Activated T-helper 1 cell treated with anti-CD3 and anti-CD28 coated beads, Interleukin-12 subunit alpha, Interleukin-12 subunit beta, Interleukin-2, Interleukin-4 antibody, amounts not matched to agents 30 ng/mL and 10 ng/mL and 1 ng/mL, durations not matched to agents 14 hours and 24 hours and 36 hours (primary cell): ENCODE measurements at regions of chr14 and their contacts with region 1.

Region 1: DNA sequence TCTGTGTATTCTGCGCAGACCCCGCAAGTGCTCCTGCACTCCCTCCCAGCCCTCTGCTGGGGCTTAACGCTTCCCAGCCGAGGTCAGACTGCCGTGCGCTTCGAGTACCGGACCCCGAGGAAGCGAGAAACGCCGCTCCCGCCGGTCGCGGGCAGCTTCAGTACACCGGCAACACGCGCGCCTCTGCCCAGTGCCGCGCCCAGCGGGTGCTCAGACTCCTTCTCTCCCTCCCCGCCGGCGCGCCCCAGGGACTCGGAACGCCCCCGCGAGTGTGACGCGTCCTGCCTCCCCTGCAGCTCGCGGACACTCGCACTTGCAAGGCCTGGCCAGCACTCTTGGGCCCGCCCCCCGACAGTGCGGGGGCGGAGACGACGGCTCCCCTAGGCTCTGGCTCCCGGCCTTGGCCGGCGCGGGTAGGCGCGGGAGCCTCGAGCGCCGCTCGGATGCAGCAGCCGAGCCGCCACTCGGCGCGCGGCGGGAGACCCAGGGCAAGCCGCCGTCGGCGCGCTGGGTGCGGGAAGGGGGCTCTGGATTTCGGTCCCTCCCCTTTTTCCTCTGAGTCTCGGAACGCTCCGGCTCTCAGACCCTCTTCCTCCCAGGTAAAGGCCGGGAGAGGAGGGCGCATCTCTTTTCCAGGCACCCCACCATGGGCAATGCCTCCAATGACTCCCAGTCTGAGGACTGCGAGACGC is at the start of gene PTGER2:
- DNase-seq: peak; percentile 85
- H3K4me3 Mint-ChIP-seq: peak within 1 kb of the TSS; percentile 98
- H3K27ac Mint-ChIP-seq: peak within 1 kb of the TSS; percentile 99
- H3K4me1 Mint-ChIP-seq: peaks cover 71% of the 10 kb centered on the region
- H3K27me3 Mint-ChIP-seq: peaks cover 1% of the 10 kb centered on the region
- total RNA-seq, gene PTGER2: 67.4 and 67.9 TPM in 2 replicates

Region 2: DNA sequence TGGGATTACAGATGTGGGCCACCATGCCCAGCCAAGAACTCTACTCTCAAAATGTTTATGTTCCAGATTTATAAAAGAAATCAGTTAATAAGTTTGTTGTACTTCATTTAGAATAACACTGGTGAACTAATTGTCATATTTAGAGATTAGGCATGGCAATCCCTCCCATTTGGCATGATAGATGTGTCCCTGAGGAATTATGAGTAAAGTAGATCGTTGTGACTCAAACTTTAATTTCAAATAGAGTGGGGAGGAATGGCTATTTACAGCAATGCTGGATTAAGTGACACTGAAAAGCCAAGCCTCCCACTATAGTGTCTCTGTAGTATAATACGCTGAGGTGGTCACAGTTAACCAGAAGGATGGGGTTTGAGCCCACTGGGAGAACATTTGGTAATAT is 364.0 kb before region 1 on chr14:
- intact Hi-C with region 1: no loop called
- DNase-seq: no peak
- H3K4me3 Mint-ChIP-seq: no peak overlapping the region
- H3K27ac Mint-ChIP-seq: peak overlapping the region; percentile 65
- H3K4me1 Mint-ChIP-seq: peaks cover 5% of the 10 kb centered on the region
- H3K27me3 Mint-ChIP-seq: no peaks in the 10 kb centered on the region

Region 3: GRCh38 chr14:51989293-51990234 is 324.5 kb before region 1 on chr14 and contains the start of gene RTRAF:
- intact Hi-C with region 1: loop called (anchors 5 kb)
- DNase-seq: peak; percentile 89
- H3K4me3 Mint-ChIP-seq: peak within 1 kb of the TSS; percentile 94
- H3K27ac Mint-ChIP-seq: peak within 1 kb of the TSS; percentile 91
- H3K4me1 Mint-ChIP-seq: peaks cover 31% of the 10 kb centered on the region
- H3K27me3 Mint-ChIP-seq: no peaks in the 10 kb centered on the region
- total RNA-seq, gene RTRAF: 215 and 230 TPM in 2 replicates

Region 4: GRCh38 chr14:52325126-52325525 is 11.1 kb after region 1 on chr14:
- intact Hi-C with region 1: loop called (anchors 1 kb)
- DNase-seq: peak; percentile 52
- H3K4me3 Mint-ChIP-seq: peak overlapping the region; percentile 77
- H3K27ac Mint-ChIP-seq: peak overlapping the region; percentile 62
- H3K4me1 Mint-ChIP-seq: peaks cover 90% of the 10 kb centered on the region
- H3K27me3 Mint-ChIP-seq: no peaks in the 10 kb centered on the region

Region 5: GRCh38 chr14:52346778-52347177 is 32.7 kb after region 1 on chr14:
- intact Hi-C with region 1: no loop called
- DNase-seq: no peak
- H3K4me3 Mint-ChIP-seq: no peak overlapping the region
- H3K27ac Mint-ChIP-seq: no peak overlapping the region
- H3K4me1 Mint-ChIP-seq: peaks cover 32% of the 10 kb centered on the region
- H3K27me3 Mint-ChIP-seq: peaks cover 7% of the 10 kb centered on the region

Region 6: DNA sequence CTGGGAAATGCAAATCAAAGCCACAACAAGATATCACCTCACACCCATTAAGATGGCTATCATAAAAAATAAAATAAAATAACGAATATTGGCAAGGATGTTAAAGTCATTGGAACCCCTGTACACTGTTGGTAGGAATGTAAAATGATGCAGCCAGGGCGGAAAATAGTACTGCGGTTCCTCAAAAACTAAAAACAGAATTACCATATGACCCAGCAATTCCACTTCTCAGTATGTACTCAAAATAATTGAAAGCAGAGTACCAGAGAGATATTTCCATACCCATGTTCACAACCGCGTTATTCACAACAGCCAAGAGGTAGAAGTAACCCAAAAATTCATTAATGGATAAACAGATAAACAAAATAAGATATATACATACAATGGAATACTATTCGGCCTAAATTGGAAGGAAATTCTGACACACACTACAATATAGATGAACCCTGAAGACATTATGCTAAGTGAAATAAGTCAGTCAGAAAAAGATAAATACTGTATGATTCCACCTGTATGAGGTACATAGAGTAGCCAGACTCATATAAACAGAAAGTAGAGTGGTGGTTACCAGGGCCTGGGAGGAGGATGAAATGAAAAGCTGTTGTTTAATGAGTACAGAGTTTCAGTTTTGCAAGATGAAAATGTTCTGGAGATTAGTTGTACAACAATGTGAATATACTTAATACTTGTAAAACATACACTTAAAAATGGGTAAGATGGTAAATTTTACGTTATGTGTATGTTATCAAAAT is 153.6 kb after region 1 on chr14:
- intact Hi-C with region 1: loop called (anchors 1 kb)
- DNase-seq: no peak
- H3K4me3 Mint-ChIP-seq: no peak overlapping the region
- H3K27ac Mint-ChIP-seq: peak overlapping the region; percentile 75
- H3K4me1 Mint-ChIP-seq: peaks cover 24% of the 10 kb centered on the region
- H3K27me3 Mint-ChIP-seq: no peaks in the 10 kb centered on the region

Region 7: DNA sequence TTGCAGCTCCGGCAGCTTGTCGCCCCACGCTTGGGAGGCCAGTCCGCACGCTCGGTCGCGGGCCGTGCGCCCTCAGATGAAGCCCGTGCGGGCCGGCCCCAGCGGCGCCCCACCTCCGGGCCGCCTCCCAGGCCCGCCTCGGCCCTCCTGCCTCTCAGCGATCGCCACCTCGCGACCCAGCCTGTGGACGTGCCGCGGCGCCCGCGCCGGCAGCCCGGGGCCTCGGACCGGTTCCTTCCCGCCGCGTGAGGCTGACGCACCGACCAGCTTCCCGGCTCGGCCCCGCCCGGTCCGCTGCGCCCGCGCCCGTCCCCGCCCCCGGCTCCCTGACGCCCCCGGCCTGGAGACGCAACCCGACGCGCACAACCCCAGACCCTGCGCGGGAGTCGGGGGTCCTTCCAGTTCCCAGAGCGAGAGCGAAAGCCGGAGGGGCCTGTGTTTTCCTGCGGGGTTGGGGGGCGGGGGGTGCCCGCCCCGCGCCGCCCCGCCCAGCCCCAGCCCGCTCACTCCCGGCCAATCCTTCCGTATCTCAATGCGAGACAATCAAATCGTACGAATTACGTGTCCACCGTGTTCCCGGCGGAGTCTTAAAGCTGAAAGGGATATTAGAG is 381.5 kb after region 1 on chr14 and contains the start of gene ERO1A:
- intact Hi-C with region 1: loop called (anchors 10 kb)
- DNase-seq: peak; percentile 67
- H3K4me3 Mint-ChIP-seq: peak within 1 kb of the TSS; percentile 100
- H3K27ac Mint-ChIP-seq: peak within 1 kb of the TSS; percentile 99
- H3K4me1 Mint-ChIP-seq: peaks cover 42% of the 10 kb centered on the region
- H3K27me3 Mint-ChIP-seq: peaks cover 1% of the 10 kb centered on the region
- total RNA-seq, gene ERO1A: 144 and 158 TPM in 2 replicates

Region 8: DNA sequence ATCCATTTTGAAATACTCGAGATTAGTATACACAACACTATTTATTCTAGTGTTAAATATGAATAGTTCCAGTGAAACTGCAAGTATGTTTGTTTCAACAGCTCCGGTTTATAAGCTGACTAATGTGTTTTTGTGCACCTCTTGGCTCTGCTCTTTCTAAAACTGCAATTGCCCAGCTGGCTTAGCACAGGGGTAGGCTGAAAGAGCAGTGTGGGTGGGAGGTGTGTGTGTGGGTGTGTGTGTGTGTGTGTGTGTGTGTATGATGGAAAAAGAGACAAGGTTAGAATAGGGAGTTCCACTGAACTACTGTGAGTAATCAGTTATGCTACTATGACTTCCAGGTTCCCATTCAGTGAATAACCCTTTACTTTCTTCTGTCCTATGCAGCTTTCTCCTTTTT is 876.9 kb after region 1 on chr14:
- intact Hi-C with region 1: loop called (anchors 10 kb)
- DNase-seq: peak; percentile 28
- H3K4me3 Mint-ChIP-seq: peak overlapping the region; percentile 80
- H3K27ac Mint-ChIP-seq: peak overlapping the region; percentile 99
- H3K4me1 Mint-ChIP-seq: peaks cover 54% of the 10 kb centered on the region
- H3K27me3 Mint-ChIP-seq: peaks cover 4% of the 10 kb centered on the region